A549 (cell line): ENCODE measurements at regions of chr5 and their contacts with region 1.

Region 1: GRCh38 chr5:38441453-38442246 is 114.8 kb downstream of the LIFR start:
- DNase-seq: peak; percentile 82 to 92
- ATAC-seq: peak; percentile 99 to 100
- H3K4me3 ChIP-seq: no peak overlapping the region
- H3K27ac ChIP-seq: 0 out of 6 replicates have a peak overlapping the region, but pooled peaks of 1 of the 2 experiments have one; percentile 43
- H3K4me1 ChIP-seq: peaks cover 3% of the 10 kb centered on the region; the same call in 1 of the 3 replicates
- CTCF ChIP-seq: peak; percentile 97
- EP300 ChIP-seq: no peak
- POLR2A ChIP-seq: no peak
- RAD21 ChIP-seq: peak; percentile 99 to 100

Region 2: GRCh38 chr5:38364825-38365224 is 76.8 kb before region 1 on chr5:
- CTCF ChIA-PET with region 1: no interaction called
- POLR2A ChIA-PET with region 1: no interaction called
- DNase-seq: no peak
- ATAC-seq: no peak
- H3K4me3 ChIP-seq: no peak overlapping the region
- H3K27ac ChIP-seq: no peak overlapping the region
- H3K4me1 ChIP-seq: no peaks in the 10 kb centered on the region
- CTCF ChIP-seq: no peak
- EP300 ChIP-seq: no peak
- POLR2A ChIP-seq: no peak
- RAD21 ChIP-seq: no peak

Region 3: GRCh38 chr5:38420691-38421390 is 20.8 kb before region 1 on chr5:
- CTCF ChIA-PET with region 1: interaction called, 78 read pairs
- POLR2A ChIA-PET with region 1: no interaction called
- DNase-seq: peak; percentile 73 to 80
- ATAC-seq: peak; percentile 93 to 97
- H3K4me3 ChIP-seq: no peak overlapping the region
- H3K27ac ChIP-seq: no peak overlapping the region
- H3K4me1 ChIP-seq: no peaks in the 10 kb centered on the region
- CTCF ChIP-seq: peak; percentile 86
- EP300 ChIP-seq: no peak
- POLR2A ChIP-seq: no peak
- RAD21 ChIP-seq: peak; percentile 76 to 83

Region 4: GRCh38 chr5:38515646-38516045 is 74.0 kb after region 1 on chr5:
- CTCF ChIA-PET with region 1: interaction called, 21 read pairs
- POLR2A ChIA-PET with region 1: no interaction called
- DNase-seq: peak in 1 of 2 experiments; percentile 29
- ATAC-seq: peak in 1 of 2 experiments; percentile 74; a peak in 3 of 6 replicates
- H3K4me3 ChIP-seq: no peak overlapping the region
- H3K27ac ChIP-seq: no peak overlapping the region
- H3K4me1 ChIP-seq: no peaks in the 10 kb centered on the region
- CTCF ChIP-seq: peak; percentile 36; the same call in 2 of the 3 replicates
- EP300 ChIP-seq: no peak
- POLR2A ChIP-seq: no peak
- RAD21 ChIP-seq: peak in 1 of 2 experiments; percentile 40; a peak in 3 of 5 replicates

Region 5: GRCh38 chr5:38562444-38562843 is 120.8 kb after region 1 on chr5:
- CTCF ChIA-PET with region 1: interaction called, 62 read pairs
- POLR2A ChIA-PET with region 1: no interaction called
- DNase-seq: no peak
- ATAC-seq: no peak
- H3K4me3 ChIP-seq: no peak overlapping the region
- H3K27ac ChIP-seq: no peak overlapping the region
- H3K4me1 ChIP-seq: peaks cover 14% of the 10 kb centered on the region
- CTCF ChIP-seq: no peak
- EP300 ChIP-seq: no peak
- POLR2A ChIP-seq: no peak
- RAD21 ChIP-seq: no peak

Region 6: GRCh38 chr5:38714703-38715355 is 273.2 kb after region 1 on chr5:
- CTCF ChIA-PET with region 1: interaction called, 10 read pairs
- POLR2A ChIA-PET with region 1: no interaction called
- DNase-seq: no peak
- ATAC-seq: no peak
- H3K4me3 ChIP-seq: no peak overlapping the region
- H3K27ac ChIP-seq: no peak overlapping the region
- H3K4me1 ChIP-seq: no peaks in the 10 kb centered on the region
- CTCF ChIP-seq: no peak
- EP300 ChIP-seq: no peak
- POLR2A ChIP-seq: no peak
- RAD21 ChIP-seq: no peak

Region 7: DNA sequence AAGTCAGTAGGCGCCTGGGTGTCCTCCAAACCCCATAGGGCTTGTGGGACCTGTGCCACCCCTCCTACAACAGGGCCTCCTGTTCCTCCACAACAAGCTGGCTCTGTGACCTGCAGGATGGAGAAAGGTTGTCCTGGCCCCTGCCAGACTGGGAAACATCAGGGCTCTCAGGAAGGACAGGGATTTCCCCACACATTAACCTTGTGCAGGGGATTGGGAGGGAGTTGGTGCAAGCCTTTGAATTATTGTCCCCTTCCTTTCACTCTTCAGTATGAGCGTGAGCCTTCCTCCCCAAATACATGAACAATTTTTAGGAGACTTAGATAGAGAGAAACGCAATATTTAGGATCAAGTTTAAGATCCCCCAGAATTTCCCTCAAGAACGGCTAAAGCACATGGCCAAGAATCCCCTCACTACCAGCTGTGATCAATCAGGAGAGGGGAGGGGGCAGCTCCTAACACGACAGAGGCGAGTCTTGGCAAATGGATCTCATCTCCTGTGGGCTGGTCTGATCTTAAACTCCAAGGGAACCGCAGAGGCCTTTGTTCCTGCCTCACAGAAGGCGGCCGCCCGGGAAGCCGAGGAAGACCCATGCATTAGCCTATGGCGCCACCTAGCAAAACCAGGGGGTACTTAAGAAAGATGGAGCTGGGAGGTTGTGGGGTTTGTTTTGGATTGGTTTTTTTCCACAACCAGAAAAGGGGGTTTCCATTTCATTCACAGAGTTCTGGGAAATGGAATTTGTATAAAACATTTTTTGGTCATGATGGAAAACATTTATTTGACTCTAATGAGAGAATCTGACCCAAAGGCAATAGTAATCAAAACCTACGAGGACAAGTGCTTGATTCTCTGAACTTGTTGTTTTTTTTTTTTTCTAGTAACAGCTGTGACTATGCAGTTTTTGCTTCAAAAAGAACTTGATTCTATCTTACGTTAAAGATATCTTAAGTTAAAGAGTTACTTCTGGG is 368.0 kb after region 1 on chr5:
- CTCF ChIA-PET with region 1: interaction called, 242 read pairs
- POLR2A ChIA-PET with region 1: interaction called, 21 read pairs
- DNase-seq: peak; percentile 80 to 87
- ATAC-seq: peak; percentile 78 to 89
- H3K4me3 ChIP-seq: no peak overlapping the region
- H3K27ac ChIP-seq: peak overlapping the region; percentile 46 to 79; a peak in 4 of 6 replicates
- H3K4me1 ChIP-seq: peaks cover 43% of the 10 kb centered on the region
- CTCF ChIP-seq: peak; percentile 89
- EP300 ChIP-seq: no peak
- POLR2A ChIP-seq: no peak
- RAD21 ChIP-seq: peak; percentile 96 to 99

Region 8: GRCh38 chr5:39031041-39031440 is 589.4 kb after region 1 on chr5:
- CTCF ChIA-PET with region 1: no interaction called
- POLR2A ChIA-PET with region 1: no interaction called
- DNase-seq: no peak
- ATAC-seq: no peak
- H3K4me3 ChIP-seq: no peak overlapping the region
- H3K27ac ChIP-seq: no peak overlapping the region
- H3K4me1 ChIP-seq: peaks cover 20% of the 10 kb centered on the region; the same call in 2 of the 3 replicates
- CTCF ChIP-seq: no peak
- EP300 ChIP-seq: no peak
- POLR2A ChIP-seq: no peak
- RAD21 ChIP-seq: no peak